IMR-90 (cell line): ENCODE measurements at regions of chr4 and their contacts with region 1.

Region 1: GRCh38 chr4:46954643-46955042 is 38.7 kb downstream of the GABRA4 start:
- DNase-seq: no peak
- ATAC-seq: no peak
- H3K4me3 ChIP-seq: no peak overlapping the region
- H3K27ac ChIP-seq: no peak overlapping the region
- H3K4me1 ChIP-seq: peaks cover 6% of the 10 kb centered on the region
- H3K27me3 ChIP-seq: no peaks in the 10 kb centered on the region
- CTCF ChIP-seq: no peak
- POLR2A ChIP-seq: no peak
- RAD21 ChIP-seq: no peak

Region 2: GRCh38 chr4:47002593-47002992 is 48.0 kb after region 1 on chr4:
- CTCF ChIA-PET with region 1: no interaction called
- POLR2A ChIA-PET with region 1: no interaction called
- dilution Hi-C with region 1: no loop called
- in situ Hi-C with region 1: no loop called
- intact Hi-C with region 1: loop called (anchors 5 kb)
- DNase-seq: peak; percentile 79
- ATAC-seq: peak; percentile 97
- H3K4me3 ChIP-seq: no peak overlapping the region
- H3K27ac ChIP-seq: no peak overlapping the region
- H3K4me1 ChIP-seq: no peaks in the 10 kb centered on the region
- H3K27me3 ChIP-seq: no peaks in the 10 kb centered on the region
- CTCF ChIP-seq: peak; percentile 68
- POLR2A ChIP-seq: no peak
- RAD21 ChIP-seq: peak; percentile 64

Region 3: GRCh38 chr4:48698029-48698971 is 1743.7 kb after region 1 on chr4:
- CTCF ChIA-PET with region 1: no interaction called
- POLR2A ChIA-PET with region 1: interaction called, 15 read pairs
- dilution Hi-C with region 1: no loop called
- in situ Hi-C with region 1: no loop called
- intact Hi-C with region 1: no loop called
- DNase-seq: peak; percentile 85
- ATAC-seq: peak; percentile 82
- H3K4me3 ChIP-seq: no peak overlapping the region
- H3K27ac ChIP-seq: peak overlapping the region; percentile 5; the same call in 1 of the 2 replicates
- H3K4me1 ChIP-seq: peaks cover 11% of the 10 kb centered on the region; the same call in 1 of the 2 replicates
- H3K27me3 ChIP-seq: no peaks in the 10 kb centered on the region
- CTCF ChIP-seq: no peak
- POLR2A ChIP-seq: no peak
- RAD21 ChIP-seq: no peak